BJ (cell line): ENCODE measurements at regions of chr2 and their contacts with region 1.

Region 1: GRCh38 chr2:64988420-64989125 is 626 bp upstream of the SLC1A4 start:
- DNase-seq: no peak
- H3K4me3 ChIP-seq: peak overlapping the region; percentile 73
- H3K27me3 ChIP-seq: peaks cover 1% of the 10 kb centered on the region; the same call in 1 of the 2 replicates
- CTCF ChIP-seq: peak; percentile 37; the same call in 1 of the 2 replicates

Region 2: DNA sequence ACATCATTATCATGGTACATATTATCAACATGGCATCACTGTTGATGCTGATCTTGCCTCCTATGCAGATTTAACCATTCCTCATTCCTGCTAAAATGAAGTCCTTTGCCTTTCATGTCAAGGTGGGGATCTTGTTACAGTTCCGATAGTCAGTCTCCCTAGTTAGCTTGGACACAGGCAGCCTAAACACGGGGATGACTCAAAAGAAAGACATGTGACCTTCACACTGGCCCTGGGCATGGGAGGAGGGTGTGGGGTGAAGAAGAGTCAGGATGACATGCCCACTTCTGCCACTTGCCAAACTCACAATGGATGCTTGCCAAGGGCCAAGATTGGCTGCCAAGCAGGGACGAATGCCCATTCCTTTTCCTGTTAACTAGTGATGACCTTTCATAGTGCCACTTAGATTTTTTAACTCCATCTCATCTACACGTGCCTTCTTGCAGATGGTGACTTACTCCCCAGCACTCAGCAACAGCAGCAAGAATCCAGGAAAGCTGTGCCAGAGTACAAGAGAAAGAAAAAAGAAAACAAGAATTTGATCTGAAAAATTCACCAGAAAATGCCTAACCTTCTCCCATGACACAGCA is 13.2 kb before region 1 on chr2:
- CTCF ChIA-PET with region 1: interaction called, 6 read pairs
- POLR2A ChIA-PET with region 1: interaction called, 10 read pairs
- DNase-seq: no peak
- H3K4me3 ChIP-seq: no peak overlapping the region
- H3K27me3 ChIP-seq: no peaks in the 10 kb centered on the region
- CTCF ChIP-seq: no peak

Region 3: DNA sequence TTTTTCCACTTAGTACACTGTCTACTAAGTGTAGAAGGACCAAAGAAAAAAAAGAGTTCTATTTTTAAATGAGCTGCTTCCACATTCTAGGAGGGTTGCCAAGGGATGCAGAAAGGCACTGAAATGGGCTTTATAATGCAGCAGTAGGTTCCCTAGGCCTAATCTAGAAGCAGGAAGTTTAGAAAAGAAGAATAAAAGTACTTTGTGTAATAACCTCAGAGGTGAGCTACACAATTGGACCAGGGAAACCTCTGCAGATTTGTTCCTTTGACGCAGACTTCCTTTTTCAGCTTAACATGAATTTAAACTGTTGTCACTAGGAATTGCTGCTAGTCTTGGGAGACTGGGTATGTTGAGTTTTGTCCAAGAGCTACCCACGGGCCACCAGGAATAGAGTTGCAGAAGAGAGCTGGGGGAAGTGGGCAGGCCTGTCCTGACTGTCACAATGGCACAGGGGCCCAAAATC is 175.9 kb after region 1 on chr2:
- CTCF ChIA-PET with region 1: no interaction called
- POLR2A ChIA-PET with region 1: interaction called, 11 read pairs
- DNase-seq: no peak
- H3K4me3 ChIP-seq: no peak overlapping the region
- H3K27me3 ChIP-seq: no peaks in the 10 kb centered on the region
- CTCF ChIP-seq: no peak